ENCODE measurements at regions of chr16 and their contacts with region 1.

Region 1: GRCh38 chr16:81610144-81610842 is 165.7 kb downstream of the CMIP start:
- DNase-seq: no peak
- H3K4me3 ChIP-seq: peak overlapping the region in 3 of 4 donors; percentile 2 to 58 (median 30)
- H3K27ac ChIP-seq: peak overlapping the region; percentile 51 to 87 (median 74)
- H3K4me1 ChIP-seq: peaks cover 33 to 94% (median 58%) of the 10 kb centered on the region in 3 donors
- H3K27me3 ChIP-seq: no peaks in the 10 kb centered on the region
- CTCF ChIP-seq: no peak
- POLR2A ChIP-seq: no peak

Region 2: DNA sequence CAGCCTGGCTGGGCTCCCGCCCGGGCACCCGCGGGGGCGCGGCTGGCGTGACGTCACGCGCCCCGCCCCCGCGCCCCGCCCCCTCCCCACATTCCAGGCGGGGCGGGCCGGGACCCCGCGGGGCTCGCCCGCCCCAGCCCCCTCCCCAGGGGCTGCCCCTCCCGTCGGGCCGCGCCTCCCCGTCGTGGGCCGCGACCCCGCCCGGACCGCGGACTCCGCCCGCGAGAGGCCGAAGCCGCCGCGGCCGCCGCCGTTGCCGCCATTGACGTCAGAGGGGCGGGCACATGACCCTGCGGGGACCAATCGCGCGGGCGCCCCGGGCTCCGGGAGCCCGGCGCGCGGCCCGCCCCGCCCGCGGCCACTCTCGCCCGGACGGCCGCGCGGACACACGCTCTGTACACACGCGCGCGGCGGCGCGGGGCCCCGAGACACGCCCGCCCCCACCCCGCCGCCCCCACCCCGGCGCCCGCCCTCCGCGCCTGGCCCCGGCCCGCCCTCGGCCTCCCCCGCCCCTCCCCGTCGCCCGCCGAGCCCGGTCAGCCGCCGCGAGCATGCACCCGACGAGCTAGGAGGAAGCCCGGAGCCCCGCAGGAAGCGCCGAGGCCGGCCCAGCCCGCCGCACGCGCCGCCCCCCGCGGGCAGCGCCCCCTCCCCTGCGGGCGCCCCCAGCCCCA is 165.7 kb before region 1 on chr16 and contains the start of gene CMIP:
- intact Hi-C with region 1: loop called (anchors 5 kb)
- DNase-seq: peak; percentile 37
- H3K4me3 ChIP-seq: peak within 1 kb of the TSS; percentile 91 to 98 (median 96)
- H3K27ac ChIP-seq: peak within 1 kb of the TSS; percentile 93 to 97 (median 96)
- H3K4me1 ChIP-seq: peaks cover 23 to 45% (median 27%) of the 10 kb centered on the region in 3 donors
- H3K27me3 ChIP-seq: no peaks in the 10 kb centered on the region
- CTCF ChIP-seq: no peak
- POLR2A ChIP-seq: peak in 1 of 4 donors; percentile 2
- total RNA-seq, gene CMIP: 17.1 to 60.5 (median 39.7) TPM

Region 3: GRCh38 chr16:81526935-81527334 is 83.4 kb before region 1 on chr16:
- intact Hi-C with region 1: no loop called
- DNase-seq: no peak
- H3K4me3 ChIP-seq: peak overlapping the region in 1 of 4 donors; percentile 10
- H3K27ac ChIP-seq: peak overlapping the region; percentile 85 to 96 (median 95)
- H3K4me1 ChIP-seq: peaks cover 51 to 99% (median 54%) of the 10 kb centered on the region in 3 donors
- H3K27me3 ChIP-seq: no peaks in the 10 kb centered on the region
- CTCF ChIP-seq: no peak
- POLR2A ChIP-seq: peak in 1 of 4 donors; percentile 26